Activated CD4-positive, alpha-beta memory T cell treated with anti-CD3 and anti-CD28 coated beads for 36 hours (primary cell): ENCODE measurements at regions of chr9 and their contacts with region 1.

Region 1: GRCh38 chr9:109894921-109895758 is 115.1 kb downstream of the PALM2AKAP2 start:
- DNase-seq: peak; percentile 82
- H3K4me3 Mint-ChIP-seq: peak overlapping the region; percentile 31
- H3K27ac Mint-ChIP-seq: peak overlapping the region; percentile 89
- H3K4me1 Mint-ChIP-seq: peaks cover 34% of the 10 kb centered on the region
- H3K27me3 Mint-ChIP-seq: peaks cover 9% of the 10 kb centered on the region

Region 2: DNA sequence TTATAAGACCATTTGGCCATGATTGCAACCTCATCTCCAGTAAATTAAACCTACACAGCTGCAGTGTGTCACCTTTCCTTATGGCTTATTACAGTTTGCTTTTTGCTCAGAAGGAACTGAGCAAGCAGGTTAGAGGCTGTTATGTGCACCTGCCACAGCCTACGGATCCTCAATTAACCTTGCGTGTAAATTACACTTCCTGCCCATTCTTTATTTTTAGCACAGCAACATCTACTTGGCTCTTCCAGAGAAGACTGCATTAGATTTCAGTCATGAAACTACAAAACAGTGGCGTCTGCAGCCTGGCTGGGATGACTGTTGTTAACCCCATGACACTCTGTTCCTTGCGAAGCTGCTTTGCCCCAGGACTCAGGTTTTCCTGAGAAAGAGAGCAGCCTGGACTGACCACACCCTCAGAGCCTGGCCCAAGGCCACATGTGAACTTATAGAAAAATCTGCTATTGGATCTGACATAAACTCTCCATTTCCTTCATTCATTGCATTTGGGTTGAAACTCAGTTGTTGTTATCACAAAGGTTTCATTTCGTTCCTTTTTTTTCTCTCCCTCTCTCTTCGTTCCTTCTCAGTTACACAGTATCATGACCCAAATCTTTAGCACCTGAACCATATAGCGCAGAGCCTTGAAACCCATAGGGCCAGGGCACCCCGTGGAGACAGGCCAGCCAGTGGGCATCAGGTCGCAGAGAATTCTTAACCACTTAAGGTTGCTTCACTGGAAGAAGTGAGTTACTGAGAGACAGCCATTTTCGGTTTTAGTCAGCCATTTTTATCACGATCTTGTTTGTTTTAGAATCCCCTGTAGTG is 23.4 kb after region 1 on chr9:
- CTCF ChIA-PET with region 1: no interaction called
- POLR2A ChIA-PET with region 1: no interaction called
- intact Hi-C with region 1: loop called (anchors 1 kb)
- DNase-seq: peak; percentile 75
- H3K4me3 Mint-ChIP-seq: peak overlapping the region; percentile 58
- H3K27ac Mint-ChIP-seq: peak overlapping the region; percentile 97
- H3K4me1 Mint-ChIP-seq: peaks cover 29% of the 10 kb centered on the region
- H3K27me3 Mint-ChIP-seq: peaks cover 1% of the 10 kb centered on the region

Region 3: DNA sequence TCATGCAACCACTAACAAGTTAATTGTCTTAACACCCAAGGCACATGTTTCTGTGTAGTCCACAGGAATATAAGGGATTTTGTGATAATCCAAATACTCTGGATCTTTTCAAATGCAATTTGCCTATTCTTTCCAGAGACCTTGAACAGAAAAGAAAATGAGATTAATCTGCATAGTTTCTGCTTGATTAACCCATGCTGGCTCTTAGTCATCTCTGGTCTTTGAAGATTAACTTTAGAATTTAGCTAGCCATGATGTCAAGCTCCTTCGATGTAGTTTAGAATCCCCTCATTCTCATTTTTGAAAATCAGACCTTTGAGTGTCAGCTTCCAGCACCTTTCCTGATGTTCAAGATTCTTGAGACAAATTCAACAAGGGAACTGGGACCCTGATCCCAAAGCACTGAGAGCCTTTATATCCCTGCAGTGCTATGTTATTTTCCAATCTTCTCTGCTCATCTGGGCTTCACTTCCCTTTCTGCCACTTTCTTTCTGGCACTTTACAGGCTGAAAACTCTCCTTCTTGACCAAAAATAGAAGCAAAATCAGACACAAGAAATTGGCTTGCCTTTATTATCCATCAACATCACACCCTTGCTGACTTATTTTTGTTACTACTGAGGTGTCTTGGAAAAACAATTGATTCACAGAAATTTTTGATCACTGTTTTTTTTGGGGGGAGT is 40.4 kb after region 1 on chr9:
- CTCF ChIA-PET with region 1: no interaction called
- POLR2A ChIA-PET with region 1: no interaction called
- intact Hi-C with region 1: loop called (anchors 2 kb)
- DNase-seq: no peak
- H3K4me3 Mint-ChIP-seq: no peak overlapping the region
- H3K27ac Mint-ChIP-seq: peak overlapping the region; percentile 81
- H3K4me1 Mint-ChIP-seq: peaks cover 31% of the 10 kb centered on the region
- H3K27me3 Mint-ChIP-seq: peaks cover 5% of the 10 kb centered on the region

Region 4: DNA sequence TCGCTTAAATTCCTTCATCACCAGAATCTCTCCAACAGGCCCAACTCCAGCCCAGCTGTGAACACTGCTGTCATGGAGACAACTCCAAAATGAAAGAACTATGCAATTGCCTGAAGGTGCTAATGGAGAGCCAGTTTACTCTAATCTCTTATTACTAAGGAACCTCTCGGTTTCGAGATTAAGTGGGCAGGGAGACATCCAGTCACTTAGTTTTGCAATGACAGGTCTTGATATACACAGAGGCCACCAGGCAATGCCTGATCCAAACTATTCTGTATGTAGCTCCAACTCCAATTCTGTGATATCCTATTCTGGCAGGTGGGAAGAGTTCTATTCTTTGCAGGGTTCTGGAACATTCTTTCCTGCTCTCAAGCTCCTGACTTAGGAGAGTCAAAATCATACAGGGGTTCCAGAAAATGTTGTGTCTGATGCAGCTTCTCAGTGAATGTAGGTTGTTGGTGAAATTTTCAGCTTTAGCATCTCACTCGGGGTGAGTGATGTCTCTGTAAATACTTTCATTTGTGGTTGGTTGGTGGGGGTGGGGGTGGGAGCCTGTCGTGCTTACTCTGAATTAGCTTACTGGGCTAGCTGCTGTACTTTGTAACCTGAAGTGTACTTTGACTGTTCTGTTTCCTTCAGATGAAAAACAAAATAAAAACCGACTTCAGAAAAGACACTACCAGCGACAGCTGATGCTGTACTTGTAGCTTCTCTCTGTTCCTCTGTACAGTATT is 55.7 kb after region 1 on chr9:
- CTCF ChIA-PET with region 1: no interaction called
- POLR2A ChIA-PET with region 1: no interaction called
- intact Hi-C with region 1: loop called (anchors 1 kb)
- DNase-seq: peak; percentile 64
- H3K4me3 Mint-ChIP-seq: peak overlapping the region; percentile 23
- H3K27ac Mint-ChIP-seq: peak overlapping the region; percentile 82
- H3K4me1 Mint-ChIP-seq: peaks cover 30% of the 10 kb centered on the region
- H3K27me3 Mint-ChIP-seq: no peaks in the 10 kb centered on the region

Region 5: DNA sequence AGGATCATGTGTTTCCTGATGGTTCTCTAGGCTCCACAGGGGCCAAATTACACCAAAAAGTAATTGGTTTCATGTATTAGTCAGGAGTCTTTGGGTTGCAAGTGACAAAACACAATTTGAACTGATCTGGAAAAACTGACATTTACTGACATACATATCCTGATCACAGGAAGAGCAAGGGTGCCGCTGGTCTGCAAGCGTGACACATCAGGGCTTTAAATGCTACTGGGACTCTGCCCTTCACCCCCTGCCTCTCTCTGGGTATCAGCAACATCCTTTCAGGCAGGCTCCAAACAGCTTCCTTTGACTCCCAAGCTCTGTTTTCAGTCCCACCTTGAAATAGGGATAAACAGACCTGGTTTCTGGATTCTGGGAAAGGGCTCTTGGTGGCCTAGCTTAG is 82.4 kb after region 1 on chr9:
- CTCF ChIA-PET with region 1: no interaction called
- POLR2A ChIA-PET with region 1: no interaction called
- intact Hi-C with region 1: loop called (anchors 1 kb)
- DNase-seq: peak; percentile 61
- H3K4me3 Mint-ChIP-seq: no peak overlapping the region
- H3K27ac Mint-ChIP-seq: peak overlapping the region; percentile 13
- H3K4me1 Mint-ChIP-seq: peaks cover 55% of the 10 kb centered on the region
- H3K27me3 Mint-ChIP-seq: no peaks in the 10 kb centered on the region

Region 6: DNA sequence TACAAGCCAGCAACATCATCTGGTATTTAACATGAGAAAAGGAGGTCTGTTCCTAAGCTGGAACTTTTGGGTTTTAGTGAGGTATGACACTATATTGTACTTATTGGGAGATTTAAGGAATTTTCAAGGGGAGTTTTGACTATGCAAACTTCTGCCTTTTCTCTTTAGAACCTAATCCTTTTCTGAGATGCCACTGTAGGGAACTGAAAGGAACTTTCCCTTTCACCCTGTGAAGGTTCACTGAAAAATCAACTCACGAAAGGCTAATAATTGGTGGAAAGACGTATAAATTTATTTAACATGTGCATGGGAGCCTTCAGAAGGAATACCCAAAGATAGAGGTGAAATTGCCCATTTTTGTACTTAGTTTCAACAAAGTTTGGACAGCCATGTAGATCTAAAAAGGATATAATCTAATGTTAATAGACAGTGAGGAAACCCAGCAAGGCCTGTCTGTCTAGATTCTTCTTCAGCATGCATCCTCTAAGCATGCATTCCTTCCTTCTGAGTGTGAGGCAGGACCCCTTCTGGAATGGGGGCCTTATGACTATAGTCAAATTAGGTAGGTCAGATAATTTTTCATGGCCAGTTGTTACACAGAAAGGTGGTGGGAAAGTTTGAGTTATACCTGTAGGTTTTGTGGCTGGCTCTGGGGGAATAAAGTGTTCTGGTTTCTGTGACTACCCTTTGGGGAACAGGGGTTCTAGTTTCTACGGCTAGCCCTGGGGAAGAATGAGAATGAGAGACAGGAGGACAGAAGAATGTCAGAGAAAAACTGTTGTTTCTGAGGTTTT is 112.5 kb after region 1 on chr9:
- CTCF ChIA-PET with region 1: no interaction called
- POLR2A ChIA-PET with region 1: no interaction called
- intact Hi-C with region 1: no loop called
- DNase-seq: no peak
- H3K4me3 Mint-ChIP-seq: no peak overlapping the region
- H3K27ac Mint-ChIP-seq: no peak overlapping the region
- H3K4me1 Mint-ChIP-seq: peaks cover 24% of the 10 kb centered on the region
- H3K27me3 Mint-ChIP-seq: no peaks in the 10 kb centered on the region

Region 7: GRCh38 chr9:110048403-110048975 is 153.3 kb after region 1 on chr9:
- CTCF ChIA-PET with region 1: no interaction called
- POLR2A ChIA-PET with region 1: no interaction called
- intact Hi-C with region 1: loop called (anchors 2 kb)
- DNase-seq: peak; percentile 89
- H3K4me3 Mint-ChIP-seq: peak overlapping the region; percentile 90
- H3K27ac Mint-ChIP-seq: peak overlapping the region; percentile 72
- H3K4me1 Mint-ChIP-seq: peaks cover 39% of the 10 kb centered on the region
- H3K27me3 Mint-ChIP-seq: peaks cover 13% of the 10 kb centered on the region